PC-9 (cell line): ENCODE measurements at regions of chr11 and their contacts with region 1.

Region 1: DNA sequence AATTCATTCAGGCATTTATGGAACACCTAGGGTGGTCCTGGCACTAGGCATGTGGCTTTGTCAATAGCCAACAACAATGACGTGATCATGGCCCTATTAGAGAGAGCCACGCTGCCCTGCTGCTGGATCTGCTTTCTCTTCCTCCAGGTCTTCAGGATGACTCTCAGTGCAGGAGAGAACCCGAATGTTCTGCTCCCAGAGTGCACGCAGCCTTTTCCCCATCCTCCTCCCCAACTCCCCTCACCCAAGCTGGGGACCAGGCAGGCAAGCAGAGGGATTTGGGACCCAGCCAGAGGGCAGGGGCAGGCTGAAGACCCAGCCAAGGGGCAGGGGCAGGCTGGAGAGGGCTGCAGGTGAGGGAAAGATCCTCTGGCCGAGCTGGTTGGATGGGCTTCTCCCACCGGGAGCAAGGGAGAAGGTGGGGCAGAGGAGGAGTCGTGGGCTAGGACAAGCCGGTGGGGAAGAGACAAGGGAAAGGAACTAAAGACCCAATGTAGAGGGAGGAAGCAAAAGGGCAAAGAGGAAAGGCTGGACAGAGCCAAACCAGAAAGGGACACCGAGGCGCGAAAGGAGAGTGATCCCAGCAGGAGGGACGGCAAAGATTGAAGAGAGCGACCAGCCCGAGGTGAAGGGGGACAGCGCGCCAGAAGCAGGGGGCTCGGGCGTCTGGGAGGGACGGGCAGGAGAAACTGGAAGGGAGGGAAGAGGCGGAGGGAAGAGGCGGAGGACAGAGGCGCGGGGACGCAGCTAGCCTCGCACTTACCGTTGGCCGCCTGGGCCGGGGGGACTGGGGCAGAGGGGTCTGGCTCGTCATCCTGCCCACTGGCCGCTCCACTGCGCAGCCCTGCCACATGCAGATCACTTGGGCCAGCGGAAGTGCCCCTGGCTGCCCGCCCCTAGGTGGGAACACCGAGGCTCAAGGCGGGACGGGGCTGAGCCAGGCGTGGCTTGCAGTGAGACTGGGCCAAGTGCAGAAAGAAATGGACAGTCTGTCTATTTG is at the start of gene KCTD14:
- DNase-seq: peak in 1 of 2 experiments; percentile 73
- H3K4me3 ChIP-seq: peak within 1 kb of the TSS; percentile 37; the same call in 1 of the 2 replicates
- H3K27ac ChIP-seq: no peak within 1 kb of the TSS
- H3K4me1 ChIP-seq: peaks cover 17% of the 10 kb centered on the region
- H3K27me3 ChIP-seq: no peaks in the 10 kb centered on the region
- CTCF ChIP-seq: no peak
- total RNA-seq, gene KCTD14: 12.0 and 21.3 TPM in 2 replicates

Region 2: GRCh38 chr11:78432058-78432515 is 409.4 kb after region 1 on chr11:
- CTCF ChIA-PET with region 1: interaction called, 11 read pairs
- POLR2A ChIA-PET with region 1: no interaction called
- intact Hi-C with region 1: no loop called
- DNase-seq: peak; percentile 29 to 33
- H3K4me3 ChIP-seq: no peak overlapping the region
- H3K27ac ChIP-seq: no peak overlapping the region
- H3K4me1 ChIP-seq: no peaks in the 10 kb centered on the region; the same call in 1 of the 2 replicates
- H3K27me3 ChIP-seq: no peaks in the 10 kb centered on the region
- CTCF ChIP-seq: peak; percentile 75